ENCODE measurements at regions of chr17 and their contacts with region 1.

Region 1: GRCh38 chr17:4304417-4305027 is 40.7 kb upstream of the ANKFY1 start:
- DNase-seq: peak; percentile 52 to 74
- ATAC-seq: peak; percentile 90 to 92; a peak in 5 of 6 replicates
- H3K4me3 ChIP-seq: no peak overlapping the region
- H3K27ac ChIP-seq: no peak overlapping the region
- H3K4me1 ChIP-seq: peaks cover 8% of the 10 kb centered on the region; the same call in 2 of the 3 replicates
- CTCF ChIP-seq: peak; percentile 92
- EP300 ChIP-seq: no peak
- POLR2A ChIP-seq: no peak
- RAD21 ChIP-seq: peak; percentile 35 to 41; a peak in 3 of 5 replicates

Region 2: GRCh38 chr17:4263282-4264215 is 41.0 kb before region 1 on chr17 and contains the start of gene ANKFY1:
- CTCF ChIA-PET with region 1: interaction called, 12 read pairs
- POLR2A ChIA-PET with region 1: no interaction called
- DNase-seq: peak; percentile 94 to 99
- ATAC-seq: peak; percentile 92 to 97
- H3K4me3 ChIP-seq: peak within 1 kb of the TSS; percentile 88
- H3K27ac ChIP-seq: peak within 1 kb of the TSS; percentile 90 to 94
- H3K4me1 ChIP-seq: peaks cover 15% of the 10 kb centered on the region
- CTCF ChIP-seq: no peak
- EP300 ChIP-seq: no peak
- POLR2A ChIP-seq: peak; percentile 89
- RAD21 ChIP-seq: no peak; a peak in 1 of 5 replicates
- polyA plus RNA-seq, gene ANKFY1: 51.7 and 63.3 TPM in 2 replicates

Region 3: DNA sequence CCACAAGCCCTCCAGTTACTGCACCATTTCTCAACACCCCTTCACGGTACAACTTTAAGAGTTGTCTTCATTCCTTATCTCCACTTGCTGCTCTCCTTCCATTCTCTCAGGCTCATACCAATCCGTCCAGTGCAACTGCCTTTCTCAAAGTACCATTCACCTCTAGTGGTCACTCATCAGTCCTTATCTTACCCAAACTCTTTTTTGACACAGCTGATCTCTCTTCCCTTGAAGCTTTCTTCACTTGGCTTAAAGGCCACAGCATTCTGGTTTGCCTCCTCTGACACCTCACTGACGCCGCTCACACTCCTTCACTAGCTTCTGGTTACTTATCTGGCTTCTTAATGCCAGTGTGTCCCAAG is 37.1 kb after region 1 on chr17:
- CTCF ChIA-PET with region 1: interaction called, 10 read pairs
- POLR2A ChIA-PET with region 1: no interaction called
- DNase-seq: no peak
- ATAC-seq: peak; percentile 47 to 77; a peak in 5 of 6 replicates
- H3K4me3 ChIP-seq: no peak overlapping the region
- H3K27ac ChIP-seq: no peak overlapping the region
- H3K4me1 ChIP-seq: peaks cover 36% of the 10 kb centered on the region
- CTCF ChIP-seq: no peak
- EP300 ChIP-seq: no peak
- POLR2A ChIP-seq: no peak
- RAD21 ChIP-seq: no peak

Measured in A549 (cell line).